Activated CD4-positive, alpha-beta memory T cell treated with anti-CD3 and anti-CD28 coated beads for 36 hours (primary cell): ENCODE measurements at regions of chr14 and their contacts with region 1.

Region 1: DNA sequence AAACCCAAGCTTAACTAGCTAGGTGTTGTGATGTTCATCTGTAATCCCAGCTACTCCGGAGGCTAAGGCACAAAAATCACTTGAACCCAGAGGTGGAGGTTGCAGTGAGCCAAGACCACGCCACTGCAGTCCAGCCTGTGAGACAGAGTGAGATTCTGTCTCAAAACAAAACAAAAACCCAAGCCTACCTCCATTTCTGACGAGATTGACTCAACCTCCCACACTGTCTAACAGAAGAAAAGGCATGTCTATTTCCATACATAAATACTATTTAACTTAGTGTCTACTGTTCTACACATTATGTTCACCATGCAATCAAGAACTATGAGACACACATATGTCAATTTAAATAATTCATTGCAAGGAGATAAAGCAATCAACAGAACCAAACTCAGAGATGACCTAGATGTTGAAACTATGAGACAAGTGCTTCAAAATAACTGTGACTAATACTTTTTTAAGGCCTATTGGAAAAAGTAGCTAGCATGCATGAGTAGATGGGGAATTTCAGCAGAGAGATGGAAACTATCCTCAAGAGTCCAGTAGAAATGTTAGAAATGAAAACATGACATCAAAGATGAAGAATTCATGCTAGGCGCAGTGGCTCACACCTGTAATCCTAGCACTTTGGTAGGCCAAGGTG is 75.9 kb upstream of the DHRS4 start:
- DNase-seq: peak; percentile 45
- H3K4me3 Mint-ChIP-seq: no peak overlapping the region
- H3K27ac Mint-ChIP-seq: peak overlapping the region; percentile 81
- H3K4me1 Mint-ChIP-seq: peaks cover 9% of the 10 kb centered on the region
- H3K27me3 Mint-ChIP-seq: peaks cover 15% of the 10 kb centered on the region

Region 2: DNA sequence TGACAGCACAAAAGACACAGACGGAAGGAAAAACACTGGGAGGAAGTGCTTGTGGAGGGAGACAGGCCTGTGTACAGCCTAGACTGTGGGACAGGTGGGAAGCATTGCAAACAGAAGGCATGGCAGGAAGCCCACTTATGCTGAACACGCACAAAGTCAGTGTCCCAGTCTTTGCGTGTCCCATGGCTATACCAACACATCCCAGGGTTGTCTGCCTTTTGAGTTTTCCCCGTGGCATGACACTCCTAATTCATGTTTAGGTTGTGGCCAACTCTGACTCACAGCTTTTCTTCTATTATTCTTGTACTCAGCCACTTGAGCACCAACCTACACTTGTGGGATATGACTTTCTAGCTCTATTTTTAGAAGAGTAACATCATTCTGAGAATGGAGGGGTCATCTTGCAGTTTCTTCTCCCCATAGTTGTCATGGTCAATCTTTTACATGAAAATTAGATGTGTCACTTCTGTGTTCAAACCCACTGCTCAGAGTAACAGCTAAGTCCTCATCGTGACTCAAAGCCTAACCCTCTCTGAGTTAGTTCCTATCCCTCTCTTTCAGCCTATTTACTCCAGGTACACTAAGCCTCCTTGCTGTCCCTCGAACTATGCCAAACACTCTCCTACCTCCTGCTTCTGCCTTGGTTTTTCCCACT is 271.6 kb before region 1 on chr14:
- CTCF ChIA-PET with region 1: no interaction called
- POLR2A ChIA-PET with region 1: no interaction called
- intact Hi-C with region 1: loop called (anchors 1 kb)
- DNase-seq: peak; percentile 53
- H3K4me3 Mint-ChIP-seq: no peak overlapping the region
- H3K27ac Mint-ChIP-seq: peak overlapping the region; percentile 87
- H3K4me1 Mint-ChIP-seq: peaks cover 44% of the 10 kb centered on the region
- H3K27me3 Mint-ChIP-seq: no peaks in the 10 kb centered on the region